GM10248 (cell line): ENCODE measurements at regions of chr11 and their contacts with region 1.

Region 1: DNA sequence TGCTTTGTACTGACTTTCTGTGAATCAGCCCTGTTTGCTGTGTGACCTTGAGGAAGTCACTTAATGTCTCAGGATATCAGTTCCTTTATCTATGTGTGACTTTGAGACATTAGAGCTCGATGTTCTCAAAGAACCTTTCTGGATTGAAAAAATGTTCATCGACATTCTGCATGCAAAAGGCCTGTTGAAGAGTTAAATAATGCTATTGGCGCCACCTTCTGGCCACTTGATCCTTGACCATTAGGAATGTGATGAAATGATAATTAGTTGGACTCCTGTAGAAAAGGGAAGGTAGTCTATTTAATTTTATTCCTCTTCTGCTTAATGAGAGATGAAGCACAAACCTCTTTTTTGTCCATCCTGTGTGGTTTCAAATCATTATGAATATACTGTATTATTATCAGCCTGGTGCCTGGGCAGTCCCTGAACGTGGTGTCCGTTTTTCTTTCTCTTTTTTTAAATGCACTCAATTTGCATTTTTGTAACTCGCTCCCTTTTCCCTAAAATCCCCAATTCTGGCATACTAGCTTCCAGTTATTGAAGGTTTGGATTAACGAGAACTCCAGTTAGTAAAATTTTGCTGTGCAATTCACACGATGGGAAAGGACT is 20.7 kb downstream of the ELF5 start:
- DNase-seq: peak; percentile 63
- CTCF ChIP-seq: peak; percentile 82

Region 2: GRCh38 chr11:34280945-34281872 is 211.7 kb before region 1 on chr11:
- CTCF ChIA-PET with region 1: no interaction called
- POLR2A ChIA-PET with region 1: no interaction called
- DNase-seq: no peak
- CTCF ChIP-seq: no peak

Region 3: DNA sequence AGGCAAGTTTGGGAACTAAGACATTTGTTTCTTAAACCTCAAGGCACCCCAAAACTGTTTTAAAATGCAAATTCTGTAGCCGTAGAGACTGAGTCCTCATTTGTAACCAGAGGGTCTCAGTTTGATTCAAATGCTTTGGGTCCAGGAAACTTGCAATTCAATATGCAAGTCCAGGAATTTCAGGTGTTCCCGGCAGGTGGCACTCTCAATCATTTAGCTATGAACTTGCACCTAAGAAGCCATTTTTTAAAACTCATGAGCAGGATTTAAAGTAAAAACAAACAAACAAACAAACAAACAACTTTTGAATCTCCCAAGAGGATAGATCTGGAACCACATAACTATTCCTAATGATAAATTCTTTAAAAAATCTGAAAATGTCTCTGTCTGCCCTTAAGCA is 126.4 kb before region 1 on chr11:
- CTCF ChIA-PET with region 1: interaction called, 28 read pairs
- POLR2A ChIA-PET with region 1: no interaction called
- DNase-seq: peak; percentile 44
- CTCF ChIP-seq: peak; percentile 44

Region 4: DNA sequence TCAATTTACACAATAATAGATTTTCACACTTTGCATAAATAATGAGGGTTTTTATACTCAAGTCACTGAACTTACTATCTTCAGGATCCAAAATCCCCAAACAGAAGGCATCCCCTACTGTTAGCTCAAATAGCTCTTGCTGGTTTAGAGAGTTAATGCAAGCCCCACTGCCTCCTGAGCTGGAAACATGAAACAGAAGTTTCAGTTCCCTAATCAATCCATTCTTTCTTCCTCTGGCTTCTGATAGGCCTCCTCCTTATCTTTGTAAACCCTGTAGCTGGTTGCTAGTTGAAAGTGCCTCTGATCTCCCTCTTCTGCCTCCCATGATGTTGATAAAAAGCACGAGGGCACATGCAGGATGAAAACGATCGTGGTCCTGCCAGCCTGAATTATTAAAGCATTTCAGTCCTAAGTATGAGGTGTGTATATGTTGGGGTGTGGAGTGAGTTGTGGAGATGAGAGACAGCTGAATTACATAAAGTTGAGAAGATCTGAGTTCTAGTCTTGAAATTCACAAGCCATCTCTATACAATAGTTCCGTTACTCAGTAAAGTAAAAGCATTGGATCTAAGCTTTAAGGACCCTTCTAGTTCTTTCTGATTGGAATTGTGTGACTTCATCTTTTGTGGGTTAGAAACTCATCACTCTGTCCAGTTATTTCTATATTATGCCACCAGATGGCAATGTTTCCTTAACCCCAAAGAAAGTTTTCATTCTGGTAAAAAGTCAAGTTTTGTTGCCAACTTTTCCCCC is 93.0 kb after region 1 on chr11:
- CTCF ChIA-PET with region 1: no interaction called
- POLR2A ChIA-PET with region 1: no interaction called
- DNase-seq: peak; percentile 50
- CTCF ChIP-seq: peak; percentile 48

Region 5: GRCh38 chr11:34614344-34615104 is 121.6 kb after region 1 on chr11:
- CTCF ChIA-PET with region 1: no interaction called
- POLR2A ChIA-PET with region 1: no interaction called
- DNase-seq: peak; percentile 31
- CTCF ChIP-seq: no peak